ENCODE measurements at regions of chr6 and their contacts with region 1.

Region 1: DNA sequence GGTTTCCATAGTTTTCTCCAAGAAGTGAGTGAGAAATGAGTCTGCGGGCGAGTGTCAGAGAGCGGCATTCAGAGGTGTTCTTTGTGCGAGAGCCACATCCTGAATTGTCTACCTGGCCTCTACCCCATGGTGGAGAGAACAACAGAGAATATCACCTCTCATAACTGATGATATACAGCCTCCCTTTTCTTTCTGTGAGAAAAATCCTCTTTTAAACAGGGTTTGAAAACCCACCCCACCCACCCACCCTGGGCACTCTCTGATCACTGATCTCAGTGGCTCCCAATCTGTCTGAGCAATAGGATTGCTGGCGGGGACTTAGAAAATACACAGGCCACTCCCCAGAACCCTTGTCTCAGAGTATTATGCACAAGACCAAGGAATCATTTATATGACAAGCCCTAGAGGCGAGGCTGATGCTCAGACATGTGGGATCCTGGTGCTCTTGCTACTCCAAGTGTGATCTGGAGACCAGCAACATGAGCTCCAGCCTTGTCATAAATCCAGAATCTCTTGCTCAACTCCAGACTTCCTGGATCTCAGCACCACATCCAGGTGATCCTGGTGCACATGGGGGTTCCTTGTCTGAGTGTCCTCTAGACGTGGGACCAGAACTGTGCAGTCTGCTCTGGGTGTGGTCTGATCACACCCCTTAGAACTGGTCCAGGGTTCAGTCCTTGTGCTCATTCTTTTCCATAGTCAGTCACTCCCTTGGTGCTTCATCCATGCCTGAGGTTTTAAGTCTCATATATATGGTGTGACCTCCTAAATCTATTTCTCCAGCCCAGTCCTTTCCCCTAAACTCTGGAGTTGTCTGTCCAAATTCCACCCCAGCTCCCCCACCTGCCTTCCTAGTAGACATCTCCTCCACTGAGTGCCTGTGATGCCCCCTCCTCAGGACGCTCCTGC is 5.3 kb downstream of the HLA-B start:
- DNase-seq: no peak
- ATAC-seq: no peak
- H3K4me3 ChIP-seq: no peak overlapping the region
- H3K27ac ChIP-seq: no peak overlapping the region
- H3K4me1 ChIP-seq: no peaks in the 10 kb centered on the region
- H3K27me3 ChIP-seq: no peaks in the 10 kb centered on the region
- CTCF ChIP-seq: no peak
- POLR2A ChIP-seq: no peak
- RAD21 ChIP-seq: no peak

Region 2: DNA sequence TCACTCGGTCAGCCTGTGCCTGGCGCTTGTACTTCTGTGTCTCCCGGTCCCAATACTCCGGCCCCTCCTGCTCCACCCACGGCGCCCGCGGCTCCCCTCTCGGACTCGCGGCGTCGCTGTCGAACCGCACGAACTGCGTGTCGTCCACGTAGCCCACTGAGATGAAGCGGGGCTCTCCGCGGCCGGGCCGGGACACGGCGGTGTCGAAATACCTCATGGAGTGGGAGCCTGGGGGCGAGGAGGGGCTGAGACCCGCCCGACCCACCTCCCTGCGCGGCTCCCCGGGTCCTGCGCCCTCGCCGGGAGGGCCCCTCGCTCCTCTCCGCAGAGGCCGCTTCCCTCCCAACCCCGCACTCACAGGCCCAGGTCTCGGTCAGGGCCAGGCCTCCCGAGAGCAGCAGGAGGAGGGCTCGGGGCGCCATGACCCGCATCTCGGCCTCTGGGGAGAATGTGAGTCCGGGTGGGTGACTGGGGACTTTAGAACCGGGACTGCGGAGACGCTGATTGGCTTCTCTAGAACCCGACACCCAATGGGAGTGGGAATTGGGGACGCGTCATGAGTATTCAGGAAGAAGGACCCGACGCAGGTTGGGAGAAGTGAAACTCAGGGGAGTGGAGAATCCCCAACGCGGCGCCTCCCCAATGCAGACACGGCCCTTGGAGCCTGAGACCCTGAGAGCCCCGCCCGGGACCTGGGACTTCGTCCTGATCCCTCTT is 79.9 kb before region 1 on chr6 and contains the start of gene HLA-C:
- CTCF ChIA-PET with region 1: no interaction called
- POLR2A ChIA-PET with region 1: no interaction called
- RAD21 ChIA-PET with region 1: no interaction called
- intact Hi-C with region 1: loop called (anchors 5 kb)
- DNase-seq: peak; percentile 91
- ATAC-seq: peak; percentile 94
- H3K4me3 ChIP-seq: peak within 1 kb of the TSS; percentile 70 to 73
- H3K27ac ChIP-seq: peak within 1 kb of the TSS; percentile 93
- H3K4me1 ChIP-seq: peaks cover 6 to 15% of the 10 kb centered on the region in 2 experiments; a peak in 2 of 4 replicates
- H3K27me3 ChIP-seq: peaks cover 6% of the 10 kb centered on the region; the same call in 1 of the 2 replicates
- CTCF ChIP-seq: no peak
- POLR2A ChIP-seq: peak; percentile 47
- RAD21 ChIP-seq: no peak
- total RNA-seq, gene HLA-C: 333 TPM

Region 3: DNA sequence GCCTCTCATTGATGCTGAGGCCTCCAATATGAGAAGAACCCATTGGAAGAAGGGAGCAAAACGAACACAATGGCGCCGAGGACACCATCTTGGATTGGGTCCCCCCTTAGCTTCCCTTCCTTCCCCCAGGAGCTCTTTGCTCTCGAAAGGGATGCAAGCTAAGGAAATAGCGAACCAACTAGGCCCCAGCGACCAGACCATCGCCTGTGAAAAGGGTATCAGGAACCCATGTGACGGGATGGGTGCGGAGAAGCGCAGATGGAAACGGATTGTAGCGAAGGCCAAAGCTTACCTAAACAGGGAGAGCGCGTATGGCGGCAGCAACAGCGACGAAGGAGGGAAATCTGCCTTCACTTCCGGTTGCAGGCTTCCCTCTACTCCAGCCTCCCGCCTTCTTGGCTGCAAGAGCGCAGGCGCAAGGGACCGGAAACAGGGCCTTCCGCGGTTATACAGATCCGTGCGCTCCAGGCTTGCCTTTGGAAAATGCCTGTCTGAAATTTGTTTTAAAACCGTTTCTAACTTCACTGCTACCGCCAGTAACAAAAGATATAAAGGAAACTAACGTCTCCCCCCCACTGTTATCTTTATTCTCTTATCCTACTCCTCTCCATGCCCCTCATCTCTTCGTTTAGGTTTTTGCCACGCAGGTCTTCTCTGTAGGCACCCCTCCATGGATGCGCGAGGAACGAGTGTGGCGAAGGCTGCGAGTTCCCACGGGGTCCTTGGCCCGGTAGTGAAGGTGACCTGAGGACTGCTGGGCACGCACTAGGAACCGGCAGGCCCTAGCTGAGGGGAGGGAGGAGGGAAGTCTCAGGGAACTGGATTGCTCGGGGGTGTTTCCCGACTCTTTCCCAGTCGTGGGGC is 190.2 kb after region 1 on chr6 and contains the start of gene DDX39B:
- CTCF ChIA-PET with region 1: no interaction called
- POLR2A ChIA-PET with region 1: no interaction called
- RAD21 ChIA-PET with region 1: no interaction called
- intact Hi-C with region 1: no loop called
- DNase-seq: peak; percentile 95
- ATAC-seq: peak; percentile 74
- H3K4me3 ChIP-seq: peak within 1 kb of the TSS; percentile 85 to 98
- H3K27ac ChIP-seq: peak within 1 kb of the TSS; percentile 96
- H3K4me1 ChIP-seq: peaks cover 17 to 36% of the 10 kb centered on the region in 2 experiments
- H3K27me3 ChIP-seq: no peaks in the 10 kb centered on the region
- CTCF ChIP-seq: no peak
- POLR2A ChIP-seq: peak; percentile 79
- RAD21 ChIP-seq: no peak
- total RNA-seq, gene DDX39B: 545 TPM